MCF 10A (cell line): ENCODE measurements at regions of chr13 and their contacts with region 1.

Region 1: DNA sequence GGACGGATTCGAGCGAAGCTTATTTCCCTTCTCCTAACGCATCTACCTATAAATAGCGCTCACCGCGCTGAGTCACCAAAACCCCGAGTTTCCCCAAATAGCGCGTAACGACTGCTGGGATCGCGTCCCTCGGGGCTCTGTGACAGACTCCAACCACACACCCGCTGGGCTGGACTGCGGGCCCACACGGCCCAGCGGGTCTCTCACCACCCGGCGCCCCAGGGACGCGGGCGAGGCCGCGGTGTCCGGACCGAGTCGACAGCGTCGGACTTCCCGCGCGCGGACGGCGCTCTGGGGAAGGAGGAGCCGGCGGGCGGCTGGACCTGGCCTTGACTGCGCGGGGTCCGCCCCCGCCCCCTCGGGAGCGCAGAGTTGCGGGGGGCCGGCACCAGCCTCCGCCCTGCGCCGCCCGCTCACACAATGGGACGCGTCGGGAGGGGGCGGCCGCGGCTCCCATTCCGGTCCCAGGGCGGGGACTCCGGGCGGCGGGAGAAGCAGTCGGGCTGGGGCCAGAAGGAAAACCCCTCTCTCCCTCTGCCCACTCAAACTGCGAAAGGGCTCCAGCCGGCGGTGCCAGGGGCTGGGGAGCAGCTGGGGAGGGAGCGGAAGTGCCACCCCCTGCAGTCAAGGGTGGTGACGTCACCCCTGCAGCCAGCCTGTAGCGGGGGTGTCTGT is 108.8 kb downstream of the KCNRG start:
- DNase-seq: peak; percentile 92
- H3K4me3 Mint-ChIP-seq: peak overlapping the region; percentile 87
- H3K27ac Mint-ChIP-seq: peak overlapping the region; percentile 94
- H3K4me1 Mint-ChIP-seq: peaks cover 28% of the 10 kb centered on the region
- H3K27me3 Mint-ChIP-seq: no peaks in the 10 kb centered on the region
- CTCF ChIP-seq: no peak

Region 2: DNA sequence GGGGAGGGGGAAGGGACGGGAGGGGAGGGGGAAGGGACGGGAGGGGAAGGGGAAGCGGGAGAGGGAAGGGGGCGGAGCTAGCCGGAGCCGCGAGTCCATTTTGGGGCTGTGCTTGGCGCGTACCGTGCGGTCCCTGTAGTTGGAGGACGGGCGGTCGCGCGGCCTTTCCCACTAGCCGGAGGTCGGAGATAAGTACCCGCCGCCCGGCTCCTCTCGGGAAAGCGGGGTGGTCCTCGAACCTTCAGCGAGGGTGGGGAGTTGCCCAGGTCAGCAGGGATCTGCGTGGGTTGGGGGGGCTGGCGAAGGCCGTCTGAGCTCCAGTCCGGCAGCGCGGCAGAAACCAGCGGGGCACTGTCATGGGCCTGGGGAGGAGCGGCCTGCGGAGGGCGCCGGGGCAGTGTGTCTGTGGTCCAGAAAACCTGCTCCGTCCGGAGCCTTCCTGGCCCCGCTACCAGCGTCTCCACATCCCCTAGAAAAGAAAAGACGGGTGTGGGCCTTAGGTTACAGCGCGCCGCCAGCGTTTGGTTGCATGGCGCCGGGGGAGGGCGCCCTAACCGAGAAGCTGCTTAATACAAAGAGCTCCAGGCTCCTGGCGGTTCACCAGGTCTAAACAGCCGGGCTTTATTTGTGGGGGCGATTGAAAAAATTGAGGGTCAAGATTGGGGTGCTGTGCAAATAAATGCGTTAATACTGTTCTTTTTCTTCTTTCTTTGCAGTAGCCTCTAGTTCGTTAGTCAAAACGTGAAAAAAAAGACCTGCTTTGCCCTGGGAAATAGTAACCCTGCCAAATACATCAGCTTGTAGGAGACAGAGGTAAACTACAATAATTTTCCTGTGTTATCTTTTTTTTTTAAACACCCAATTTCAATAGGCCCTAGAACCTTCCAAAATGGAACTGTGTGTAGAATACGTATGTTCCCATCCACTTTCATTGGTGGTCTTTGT is 126.8 kb before region 1 on chr13 and contains the start of gene TRIM13:
- CTCF ChIA-PET with region 1: interaction called, 3 read pairs
- POLR2A ChIA-PET with region 1: interaction called, 31 read pairs
- intact Hi-C with region 1: no loop called
- DNase-seq: peak; percentile 91
- H3K4me3 Mint-ChIP-seq: peak within 1 kb of the TSS; percentile 89
- H3K27ac Mint-ChIP-seq: peak within 1 kb of the TSS; percentile 80
- H3K4me1 Mint-ChIP-seq: peaks cover 16% of the 10 kb centered on the region
- H3K27me3 Mint-ChIP-seq: no peaks in the 10 kb centered on the region
- CTCF ChIP-seq: peak; percentile 79
- total RNA-seq, gene TRIM13: 17.5 and 19.0 TPM in 2 replicates

Region 3: DNA sequence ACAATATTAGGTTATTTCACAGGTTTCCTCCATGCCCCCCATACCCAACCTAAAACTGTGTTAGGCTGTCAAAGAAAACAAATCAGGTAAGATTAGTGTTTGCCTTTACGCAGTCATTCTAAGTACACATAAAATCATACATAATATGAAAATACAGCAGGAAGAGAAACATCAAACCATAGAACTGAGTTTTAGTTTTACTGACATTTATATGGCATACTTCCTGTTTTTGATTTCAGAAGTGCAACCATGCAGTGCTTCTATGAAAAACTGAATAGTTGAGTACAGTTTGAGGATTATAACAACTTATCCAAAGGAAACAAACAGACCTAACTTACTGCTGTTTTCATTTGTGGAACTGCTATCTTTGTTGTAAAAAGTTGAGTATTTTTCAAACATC is 17.4 kb before region 1 on chr13:
- CTCF ChIA-PET with region 1: interaction called, 3 read pairs
- POLR2A ChIA-PET with region 1: interaction called, 17 read pairs
- intact Hi-C with region 1: no loop called
- DNase-seq: no peak
- H3K4me3 Mint-ChIP-seq: no peak overlapping the region
- H3K27ac Mint-ChIP-seq: no peak overlapping the region
- H3K4me1 Mint-ChIP-seq: peaks cover 19% of the 10 kb centered on the region
- H3K27me3 Mint-ChIP-seq: no peaks in the 10 kb centered on the region
- CTCF ChIP-seq: no peak

Region 4: DNA sequence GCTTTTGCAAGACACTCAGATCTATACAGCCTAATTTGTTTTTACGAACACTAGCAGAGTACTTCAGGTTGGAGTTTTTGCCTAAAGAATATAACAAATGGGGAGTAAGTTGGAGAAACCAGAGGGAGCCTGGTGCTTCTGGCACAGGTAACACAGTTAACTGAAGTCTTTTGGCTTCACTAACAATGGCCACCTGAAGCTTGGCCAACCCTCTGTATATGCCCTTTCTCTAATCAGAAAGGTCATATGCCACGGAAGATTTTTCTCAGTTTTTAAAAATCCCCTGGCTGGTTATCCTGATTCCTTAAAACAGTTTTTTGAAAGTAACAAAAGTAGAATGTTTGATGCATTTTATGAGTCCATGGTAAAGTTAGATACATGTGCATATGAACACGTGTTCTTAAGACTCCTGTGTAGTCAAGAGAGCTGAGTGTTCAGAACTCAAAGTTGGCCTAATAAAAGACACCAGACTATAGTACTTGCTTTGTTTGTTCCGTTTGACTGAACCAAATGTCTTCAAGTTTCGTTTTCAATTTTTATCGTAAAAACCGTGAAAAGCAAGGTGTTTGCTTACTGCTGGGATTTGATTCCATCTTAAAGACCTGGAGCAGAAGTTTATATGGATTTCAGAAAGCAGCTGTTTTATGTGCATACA is 28.8 kb after region 1 on chr13:
- CTCF ChIA-PET with region 1: no interaction called
- POLR2A ChIA-PET with region 1: interaction called, 13 read pairs
- intact Hi-C with region 1: no loop called
- DNase-seq: no peak
- H3K4me3 Mint-ChIP-seq: peak overlapping the region; percentile 53
- H3K27ac Mint-ChIP-seq: no peak overlapping the region
- H3K4me1 Mint-ChIP-seq: peaks cover 17% of the 10 kb centered on the region
- H3K27me3 Mint-ChIP-seq: no peaks in the 10 kb centered on the region
- CTCF ChIP-seq: no peak

Region 5: DNA sequence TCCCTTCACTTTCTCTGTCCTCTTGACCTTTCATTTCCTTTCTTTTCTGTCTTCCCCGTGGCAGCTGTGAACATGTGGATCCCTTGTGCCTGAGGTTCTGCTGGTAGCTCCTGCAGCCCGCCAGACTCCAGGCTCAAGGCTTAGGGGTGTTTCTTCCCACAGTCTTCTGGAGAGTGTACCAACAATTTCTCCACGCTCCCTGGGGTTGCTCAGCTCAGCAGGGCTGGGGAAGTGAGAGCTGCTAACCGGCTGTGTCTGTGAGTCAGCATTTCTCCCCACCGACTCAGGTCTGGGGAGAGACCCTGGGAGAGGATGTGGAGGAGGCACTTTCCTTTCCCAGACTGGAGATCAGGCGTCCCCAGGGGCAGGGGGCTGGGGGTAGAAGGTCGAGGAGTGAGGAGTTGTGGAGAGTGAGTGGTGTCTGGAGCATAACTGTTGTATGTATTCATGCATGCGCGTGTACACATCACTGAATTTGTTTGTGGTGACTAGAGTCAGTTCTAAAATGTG is 84.9 kb after region 1 on chr13:
- CTCF ChIA-PET with region 1: no interaction called
- POLR2A ChIA-PET with region 1: interaction called, 24 read pairs
- intact Hi-C with region 1: no loop called
- DNase-seq: peak; percentile 57
- H3K4me3 Mint-ChIP-seq: peak overlapping the region; percentile 70
- H3K27ac Mint-ChIP-seq: peak overlapping the region; percentile 91
- H3K4me1 Mint-ChIP-seq: peaks cover 16% of the 10 kb centered on the region
- H3K27me3 Mint-ChIP-seq: no peaks in the 10 kb centered on the region
- CTCF ChIP-seq: no peak

Region 6: GRCh38 chr13:50275392-50276063 is 151.5 kb after region 1 on chr13:
- CTCF ChIA-PET with region 1: interaction called, 3 read pairs
- POLR2A ChIA-PET with region 1: interaction called, 17 read pairs
- intact Hi-C with region 1: no loop called
- DNase-seq: peak; percentile 60
- H3K4me3 Mint-ChIP-seq: no peak overlapping the region
- H3K27ac Mint-ChIP-seq: no peak overlapping the region
- H3K4me1 Mint-ChIP-seq: peaks cover 12% of the 10 kb centered on the region
- H3K27me3 Mint-ChIP-seq: no peaks in the 10 kb centered on the region
- CTCF ChIP-seq: no peak

Region 7: DNA sequence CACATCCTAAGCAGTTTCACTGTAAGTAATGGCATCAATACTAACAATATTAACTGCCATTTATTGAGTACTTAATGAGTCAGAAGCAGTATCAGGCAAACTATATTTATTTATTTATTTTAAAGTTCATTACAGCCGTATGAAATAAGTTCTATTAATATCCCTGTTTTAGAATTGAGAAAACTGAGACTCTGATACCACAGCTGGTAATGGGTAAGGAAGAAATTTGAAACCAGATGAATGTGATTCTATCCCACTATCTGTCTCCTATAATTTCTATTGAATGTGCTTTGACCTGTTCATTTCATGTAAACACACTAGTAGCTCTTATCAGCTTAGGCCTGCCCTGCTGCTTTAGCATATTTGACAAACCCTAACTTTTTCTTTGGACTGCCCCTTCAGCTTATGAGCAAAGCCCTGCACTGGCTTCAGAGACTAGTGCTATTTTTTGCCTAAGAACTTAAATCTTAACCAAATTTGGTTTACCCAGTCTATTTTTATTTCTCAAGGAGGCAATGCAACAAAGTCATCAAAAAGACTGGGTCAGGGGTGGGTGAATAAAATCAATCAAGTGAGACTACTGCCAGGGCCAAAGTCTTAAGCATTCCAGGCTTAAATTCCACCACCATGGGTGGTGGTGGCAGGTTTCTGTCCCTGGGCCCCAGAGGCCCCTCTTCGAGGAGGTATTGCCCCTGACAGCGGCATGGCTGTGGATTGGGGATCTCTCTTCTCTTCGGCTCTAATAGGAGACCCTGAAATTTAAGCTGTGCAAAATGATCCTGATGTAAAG is 576.1 kb after region 1 on chr13:
- CTCF ChIA-PET with region 1: no interaction called
- POLR2A ChIA-PET with region 1: no interaction called
- intact Hi-C with region 1: no loop called
- DNase-seq: no peak
- H3K4me3 Mint-ChIP-seq: no peak overlapping the region
- H3K27ac Mint-ChIP-seq: no peak overlapping the region
- H3K4me1 Mint-ChIP-seq: no peaks in the 10 kb centered on the region
- H3K27me3 Mint-ChIP-seq: no peaks in the 10 kb centered on the region
- CTCF ChIP-seq: no peak